ENCODE measurements at regions of chr16 and their contacts with region 1.

Region 1: DNA sequence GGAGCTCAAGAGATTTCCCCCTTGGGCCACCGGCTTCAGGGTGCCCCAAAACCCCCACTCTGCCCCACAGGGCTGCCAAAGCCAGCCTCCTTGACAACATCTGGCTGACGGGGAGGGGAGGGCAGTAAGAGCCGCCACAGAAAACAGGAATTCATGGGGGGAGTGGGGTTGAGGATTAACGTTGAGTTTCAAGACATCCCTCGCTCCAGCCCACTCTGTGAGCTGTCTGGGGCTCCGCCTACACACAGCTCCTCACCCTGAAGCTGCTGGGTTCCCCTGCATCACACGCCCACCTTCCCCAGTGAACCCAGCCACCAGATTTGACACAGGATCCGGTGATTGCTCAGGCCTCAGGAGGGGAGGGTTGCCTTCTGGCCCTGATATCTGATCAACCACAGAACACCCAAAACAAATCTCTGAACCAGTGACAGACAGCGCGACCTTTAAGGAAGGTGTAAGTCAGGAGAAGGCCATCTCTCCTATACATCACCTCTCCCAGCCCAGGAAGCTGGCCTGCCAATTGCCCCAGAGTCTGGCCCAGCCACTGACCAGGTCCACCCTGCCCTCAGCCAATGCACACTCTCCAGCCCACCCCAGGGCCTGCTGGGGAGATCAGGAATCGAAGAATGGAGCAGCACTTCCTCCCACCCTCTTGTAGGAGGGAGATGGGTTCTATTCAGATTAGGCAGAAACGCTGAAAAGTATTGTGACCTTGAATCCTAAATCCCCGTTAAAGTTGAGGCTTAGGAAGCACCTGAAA is 132.1 kb downstream of the CLEC16A start:
- DNase-seq: peak; percentile 66
- ATAC-seq: peak; percentile 96
- H3K4me3 Mint-ChIP-seq: peak overlapping the region; percentile 64
- H3K27ac Mint-ChIP-seq: peak overlapping the region; percentile 91
- H3K4me1 Mint-ChIP-seq: peaks cover 80% of the 10 kb centered on the region
- H3K27me3 Mint-ChIP-seq: no peaks in the 10 kb centered on the region

Region 2: DNA sequence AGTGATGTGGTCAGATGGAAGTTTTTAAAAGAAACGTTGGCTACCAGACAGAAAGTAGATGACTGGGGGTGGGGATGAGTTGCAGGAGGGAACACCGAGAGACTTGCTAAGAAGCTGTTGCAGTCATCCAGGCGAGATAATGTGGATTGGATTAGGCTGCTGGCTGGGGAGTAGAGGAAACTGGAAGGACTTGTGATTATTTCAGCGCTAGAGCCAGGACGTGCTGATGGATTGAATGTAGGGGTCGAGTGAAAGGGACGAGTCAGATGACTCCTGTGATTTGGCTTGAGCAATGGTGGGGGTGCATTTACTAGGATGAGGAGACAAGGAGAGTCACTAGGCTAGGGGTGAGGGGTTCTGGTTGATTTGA is 43.5 kb before region 1 on chr16:
- POLR2A ChIA-PET with region 1: no interaction called
- DNase-seq: no peak
- ATAC-seq: no peak
- H3K4me3 Mint-ChIP-seq: no peak overlapping the region
- H3K27ac Mint-ChIP-seq: peak overlapping the region; percentile 47
- H3K4me1 Mint-ChIP-seq: peaks cover 23% of the 10 kb centered on the region
- H3K27me3 Mint-ChIP-seq: no peaks in the 10 kb centered on the region

Region 3: GRCh38 chr16:11051879-11052808 is 24.3 kb before region 1 on chr16:
- POLR2A ChIA-PET with region 1: interaction called, 13 read pairs
- DNase-seq: peak; percentile 86
- ATAC-seq: peak; percentile 85
- H3K4me3 Mint-ChIP-seq: peak overlapping the region; percentile 43
- H3K27ac Mint-ChIP-seq: peak overlapping the region; percentile 93
- H3K4me1 Mint-ChIP-seq: peaks cover 78% of the 10 kb centered on the region
- H3K27me3 Mint-ChIP-seq: no peaks in the 10 kb centered on the region

Region 4: GRCh38 chr16:11088074-11088730 is 11.8 kb after region 1 on chr16:
- POLR2A ChIA-PET with region 1: interaction called, 11 read pairs
- DNase-seq: no peak
- ATAC-seq: peak; percentile 60
- H3K4me3 Mint-ChIP-seq: peak overlapping the region; percentile 42
- H3K27ac Mint-ChIP-seq: peak overlapping the region; percentile 85
- H3K4me1 Mint-ChIP-seq: peaks cover 57% of the 10 kb centered on the region
- H3K27me3 Mint-ChIP-seq: no peaks in the 10 kb centered on the region

Region 5: DNA sequence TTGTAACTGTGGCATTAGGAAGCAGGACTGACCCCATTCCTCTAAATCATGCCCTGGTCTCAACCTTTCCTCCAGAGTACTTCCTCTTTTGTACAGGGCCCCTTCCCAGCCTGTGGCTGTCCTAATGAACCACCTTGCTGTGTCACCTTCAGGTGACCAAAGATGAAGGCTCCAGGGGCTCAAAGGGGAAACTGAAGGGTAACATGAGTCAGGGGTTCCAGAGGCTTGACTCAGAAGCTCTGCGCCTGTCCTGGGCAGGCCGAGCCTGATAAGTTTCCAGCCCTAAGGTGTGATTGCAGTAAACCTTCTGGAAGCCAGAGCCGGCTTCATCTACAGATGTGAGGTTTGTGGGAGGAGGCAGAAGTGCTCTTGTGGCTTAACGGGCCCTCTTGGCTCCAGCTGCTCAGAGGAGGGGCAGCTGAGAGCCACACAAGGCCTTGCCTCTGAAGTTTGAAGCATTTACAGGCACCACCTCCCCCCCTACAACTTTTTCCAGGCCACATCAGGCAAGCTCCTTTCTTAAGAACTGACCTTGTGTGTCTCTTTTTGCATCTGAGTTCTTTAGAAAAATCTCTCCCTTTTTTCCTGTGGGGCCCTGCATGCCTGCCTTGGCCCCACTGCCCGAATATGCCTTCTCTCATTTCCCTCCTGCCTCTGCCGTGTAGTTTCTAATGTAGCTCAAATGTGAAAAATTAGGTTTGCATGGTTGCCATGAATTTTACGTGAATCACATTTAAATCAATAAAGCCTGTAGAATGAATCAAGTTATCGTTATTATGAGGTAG is 17.8 kb after region 1 on chr16:
- POLR2A ChIA-PET with region 1: interaction called, 10 read pairs
- DNase-seq: peak; percentile 67
- ATAC-seq: peak; percentile 84
- H3K4me3 Mint-ChIP-seq: peak overlapping the region; percentile 61
- H3K27ac Mint-ChIP-seq: peak overlapping the region; percentile 94
- H3K4me1 Mint-ChIP-seq: peaks cover 60% of the 10 kb centered on the region
- H3K27me3 Mint-ChIP-seq: no peaks in the 10 kb centered on the region

Measured in activated naive CD8-positive, alpha-beta T cell treated with anti-CD3 and anti-CD28 coated beads, Interleukin-2, amount 10 ng/mL, durations not matched to agents 7 days and 5 days (primary cell).